GM18951 (cell line): ENCODE measurements at regions of chr10 and their contacts with region 1.

Region 1: GRCh38 chr10:99711129-99711719 is 20.7 kb downstream of the COX15 start:
- POLR2A ChIP-seq: no peak

Region 2: GRCh38 chr10:99450624-99451498 is 260.4 kb before region 1 on chr10:
- in situ Hi-C with region 1: loop called (anchors 10 kb)
- POLR2A ChIP-seq: no peak

Region 3: GRCh38 chr10:99958302-99958701 is 247.1 kb after region 1 on chr10:
- in situ Hi-C with region 1: no loop called
- POLR2A ChIP-seq: no peak